MCF 10A (cell line): ENCODE measurements at regions of chr20 and their contacts with region 1.

Region 1: DNA sequence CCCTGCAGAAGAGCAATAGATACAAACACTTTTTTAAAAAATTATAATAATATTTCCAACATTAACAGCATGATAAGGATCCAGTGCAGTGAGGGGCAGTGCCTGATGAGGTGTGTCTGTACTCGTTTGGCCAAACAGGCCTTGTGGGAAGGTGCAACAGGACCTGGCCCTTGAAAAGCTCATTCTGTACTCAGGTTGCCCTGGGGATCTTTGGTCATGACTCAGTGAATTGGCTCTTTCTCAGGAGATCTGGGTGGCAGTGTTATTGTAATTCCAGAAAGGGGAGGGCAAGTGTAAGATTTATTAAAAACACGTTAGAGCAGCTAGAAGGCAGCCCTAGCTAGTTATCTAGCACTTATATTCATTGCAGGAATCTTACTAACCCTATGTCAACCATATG is 2.9 kb upstream of the SPINT3 start:
- DNase-seq: peak; percentile 91
- H3K4me3 Mint-ChIP-seq: peak overlapping the region; percentile 21
- H3K27ac Mint-ChIP-seq: peak overlapping the region; percentile 80
- H3K4me1 Mint-ChIP-seq: peaks cover 28% of the 10 kb centered on the region
- H3K27me3 Mint-ChIP-seq: no peaks in the 10 kb centered on the region
- CTCF ChIP-seq: no peak

Region 2: DNA sequence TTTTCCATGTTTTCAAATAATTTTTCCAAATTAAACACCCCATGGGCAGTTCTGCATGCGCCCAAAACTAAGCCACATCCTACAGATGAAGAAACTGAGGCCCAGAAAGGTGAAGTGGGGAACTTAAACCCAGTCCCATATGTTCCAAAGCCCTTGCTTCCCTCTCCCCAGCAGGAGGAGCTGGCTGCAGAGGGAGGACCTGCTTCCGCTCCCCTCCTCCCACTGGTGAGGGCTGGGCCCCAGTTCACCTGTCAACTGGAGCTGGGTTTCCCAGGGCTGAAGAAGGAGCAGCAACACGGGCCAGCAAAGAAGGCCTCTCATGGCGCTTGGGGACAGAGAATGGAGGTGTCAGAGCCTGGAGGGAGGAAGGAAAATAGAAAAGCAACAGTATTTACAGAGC is 213.0 kb before region 1 on chr20:
- CTCF ChIA-PET with region 1: no interaction called
- POLR2A ChIA-PET with region 1: no interaction called
- intact Hi-C with region 1: no loop called
- DNase-seq: no peak
- H3K4me3 Mint-ChIP-seq: no peak overlapping the region
- H3K27ac Mint-ChIP-seq: no peak overlapping the region
- H3K4me1 Mint-ChIP-seq: no peaks in the 10 kb centered on the region
- H3K27me3 Mint-ChIP-seq: no peaks in the 10 kb centered on the region
- CTCF ChIP-seq: no peak

Region 3: DNA sequence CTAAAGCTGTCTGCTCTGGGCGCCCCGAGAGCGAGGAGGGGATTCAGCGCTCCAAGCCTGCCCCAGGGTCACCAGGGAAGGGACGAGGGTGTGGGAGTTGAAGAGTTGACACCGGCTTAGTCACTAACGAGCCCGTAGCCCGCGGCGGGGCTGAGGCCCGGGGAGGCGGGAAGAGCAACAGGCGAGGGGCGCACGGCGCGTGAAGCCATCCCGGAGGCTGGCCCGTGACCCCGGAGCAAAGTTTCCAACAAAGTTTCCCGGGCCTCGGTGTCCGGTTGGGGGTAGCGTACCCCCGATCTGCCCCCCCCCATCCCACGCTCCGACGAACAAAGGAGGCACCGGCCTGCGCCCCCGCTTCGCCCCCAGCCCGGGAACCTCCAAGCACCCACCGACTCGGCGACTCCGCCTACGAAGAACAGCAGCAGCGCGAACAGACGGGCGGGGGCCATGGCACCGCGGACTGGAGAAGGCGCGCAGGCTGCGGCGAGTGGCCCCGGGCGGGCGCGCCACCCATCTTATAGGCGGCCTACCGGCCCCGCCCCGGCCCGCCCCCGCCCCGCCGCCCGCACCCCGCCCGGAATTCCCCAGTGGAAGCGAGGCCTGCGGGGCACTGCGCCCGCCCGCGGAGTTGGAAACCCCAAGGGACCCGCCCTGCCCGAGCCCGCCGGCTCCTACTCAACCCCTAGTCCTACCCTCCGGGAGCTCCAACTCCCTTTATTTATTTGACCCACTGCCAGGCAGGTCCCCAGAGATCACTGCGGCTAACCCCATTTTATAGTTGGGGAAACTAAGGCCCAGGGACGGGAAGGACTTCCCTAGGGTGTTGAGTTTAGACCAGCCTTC is 170.1 kb before region 1 on chr20 and contains the start of gene SDC4:
- CTCF ChIA-PET with region 1: no interaction called
- POLR2A ChIA-PET with region 1: interaction called, 10 read pairs
- intact Hi-C with region 1: no loop called
- DNase-seq: peak; percentile 73
- H3K4me3 Mint-ChIP-seq: peak within 1 kb of the TSS; percentile 89
- H3K27ac Mint-ChIP-seq: peak within 1 kb of the TSS; percentile 93
- H3K4me1 Mint-ChIP-seq: peaks cover 20% of the 10 kb centered on the region
- H3K27me3 Mint-ChIP-seq: no peaks in the 10 kb centered on the region
- CTCF ChIP-seq: no peak
- total RNA-seq, gene SDC4: 180 and 209 TPM in 2 replicates

Region 4: DNA sequence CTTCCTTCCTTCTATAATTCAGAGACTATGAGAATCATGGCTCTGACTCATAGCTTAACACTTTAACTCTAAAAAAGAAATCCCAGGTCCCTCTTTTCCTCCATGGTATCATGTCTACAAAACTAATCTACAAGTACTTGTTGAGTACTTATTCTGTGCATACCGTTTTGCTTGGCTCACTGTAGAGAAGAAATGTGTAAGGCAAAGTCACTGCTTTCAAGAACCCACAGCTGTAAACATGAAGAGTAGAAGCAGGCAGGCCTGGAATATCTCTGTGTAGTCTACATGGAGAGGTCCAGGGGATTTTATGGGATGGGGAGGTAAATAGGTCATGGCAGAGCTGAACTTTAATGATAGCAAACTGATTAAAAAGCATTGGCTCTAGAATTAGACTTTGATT is 16.7 kb before region 1 on chr20:
- CTCF ChIA-PET with region 1: interaction called, 4 read pairs
- POLR2A ChIA-PET with region 1: interaction called, 19 read pairs
- intact Hi-C with region 1: no loop called
- DNase-seq: no peak
- H3K4me3 Mint-ChIP-seq: no peak overlapping the region
- H3K27ac Mint-ChIP-seq: no peak overlapping the region
- H3K4me1 Mint-ChIP-seq: peaks cover 4% of the 10 kb centered on the region
- H3K27me3 Mint-ChIP-seq: peaks cover 40% of the 10 kb centered on the region
- CTCF ChIP-seq: no peak

Region 5: DNA sequence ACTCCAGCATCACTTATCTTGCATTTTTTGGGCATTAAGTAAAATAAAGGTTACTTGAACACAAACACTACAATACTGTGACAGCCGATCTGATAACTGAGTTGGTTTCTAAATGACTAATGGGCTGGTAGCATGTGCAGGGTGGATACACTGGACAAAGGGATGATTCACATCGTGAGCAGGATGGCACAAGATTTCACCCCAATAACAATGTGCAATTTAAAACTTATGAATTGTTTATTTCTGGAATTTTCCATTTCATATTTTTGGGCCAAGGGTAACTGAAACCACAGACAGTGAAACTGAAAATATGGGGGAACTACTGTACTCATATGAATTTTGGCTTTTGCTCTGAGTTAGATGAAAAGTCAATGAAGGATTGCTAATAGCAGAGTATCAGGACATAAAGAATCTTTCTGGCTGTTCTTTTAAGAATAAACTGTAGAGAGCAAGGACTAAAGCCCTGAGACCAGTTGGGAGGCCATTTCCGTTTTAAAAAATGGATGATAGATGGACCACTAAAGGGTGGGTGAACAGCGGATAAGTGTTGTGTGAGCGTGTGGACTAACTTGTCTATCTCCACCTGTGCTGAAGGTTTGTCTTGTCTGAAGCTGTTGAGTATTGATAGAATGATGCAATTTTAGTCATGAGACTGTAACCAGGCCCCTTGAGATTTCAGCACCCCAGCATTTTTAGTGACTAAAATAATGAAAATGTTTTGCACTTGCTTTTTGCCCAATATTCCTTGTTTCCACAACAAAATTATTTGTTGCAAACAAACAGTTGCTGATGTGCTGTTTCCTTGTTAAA is 11.1 kb before region 1 on chr20:
- CTCF ChIA-PET with region 1: interaction called, 4 read pairs
- POLR2A ChIA-PET with region 1: interaction called, 49 read pairs
- intact Hi-C with region 1: no loop called
- DNase-seq: peak; percentile 53
- H3K4me3 Mint-ChIP-seq: no peak overlapping the region
- H3K27ac Mint-ChIP-seq: peak overlapping the region; percentile 69
- H3K4me1 Mint-ChIP-seq: peaks cover 35% of the 10 kb centered on the region
- H3K27me3 Mint-ChIP-seq: peaks cover under 1% of the 10 kb centered on the region
- CTCF ChIP-seq: no peak

Region 6: GRCh38 chr20:45538209-45538799 is 20.0 kb after region 1 on chr20:
- CTCF ChIA-PET with region 1: no interaction called
- POLR2A ChIA-PET with region 1: interaction called, 21 read pairs
- intact Hi-C with region 1: no loop called
- DNase-seq: peak; percentile 82
- H3K4me3 Mint-ChIP-seq: no peak overlapping the region
- H3K27ac Mint-ChIP-seq: no peak overlapping the region
- H3K4me1 Mint-ChIP-seq: peaks cover 15% of the 10 kb centered on the region
- H3K27me3 Mint-ChIP-seq: peaks cover 35% of the 10 kb centered on the region
- CTCF ChIP-seq: peak; percentile 11